Caco-2 (cell line): ENCODE measurements at regions of chr15 and their contacts with region 1.

Region 1: GRCh38 chr15:57146506-57147201 is 228.2 kb downstream of the TCF12 start:
- DNase-seq: peak in 1 of 2 experiments; percentile 21
- H3K4me3 ChIP-seq: no peak overlapping the region
- H3K4me3 Mint-ChIP-seq: no peak overlapping the region
- H3K27ac Mint-ChIP-seq: no peak overlapping the region
- H3K4me1 ChIP-seq: no peaks in the 10 kb centered on the region
- H3K4me1 Mint-ChIP-seq: peaks cover 11% of the 10 kb centered on the region
- H3K27me3 ChIP-seq: no peaks in the 10 kb centered on the region
- H3K27me3 Mint-ChIP-seq: no peaks in the 10 kb centered on the region
- CTCF ChIP-seq: peak; percentile 47 to 62

Region 2: DNA sequence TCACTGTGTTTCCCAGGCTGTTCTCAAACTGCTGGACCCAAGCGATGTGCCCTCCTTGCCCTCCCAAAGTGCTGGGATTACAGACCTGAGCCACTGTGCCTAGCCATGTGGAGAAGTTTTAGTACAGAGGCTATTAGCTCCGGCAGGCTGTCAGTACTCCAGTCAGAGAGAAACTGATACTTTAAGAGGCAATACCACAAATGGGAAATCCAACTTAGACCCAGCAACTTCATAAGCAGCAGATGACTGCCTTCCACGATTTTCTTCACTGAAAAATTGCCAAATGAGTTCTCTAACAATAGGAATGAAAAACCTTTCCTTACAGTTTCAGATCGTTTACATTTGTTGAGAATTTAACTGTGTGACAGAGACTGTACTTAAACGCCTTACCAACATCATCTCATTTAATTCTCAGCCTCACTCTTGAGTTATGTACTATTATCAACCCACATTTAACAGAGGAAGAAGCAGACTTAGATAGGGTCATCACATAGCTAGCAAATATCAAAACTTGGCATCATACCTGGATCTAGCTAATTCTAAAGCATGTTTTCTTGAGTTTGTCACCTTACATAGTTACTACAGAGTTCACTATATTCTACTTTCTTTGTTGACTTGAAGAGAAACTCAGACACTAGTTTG is 100.8 kb before region 1 on chr15:
- CTCF ChIA-PET with region 1: no interaction called
- POLR2A ChIA-PET with region 1: no interaction called
- intact Hi-C with region 1: no loop called
- DNase-seq: no peak
- H3K4me3 ChIP-seq: no peak overlapping the region
- H3K4me3 Mint-ChIP-seq: no peak overlapping the region
- H3K27ac Mint-ChIP-seq: no peak overlapping the region
- H3K4me1 ChIP-seq: no peaks in the 10 kb centered on the region
- H3K4me1 Mint-ChIP-seq: no peaks in the 10 kb centered on the region
- H3K27me3 ChIP-seq: no peaks in the 10 kb centered on the region
- H3K27me3 Mint-ChIP-seq: no peaks in the 10 kb centered on the region
- CTCF ChIP-seq: no peak

Region 3: GRCh38 chr15:57213862-57214261 is 67.2 kb after region 1 on chr15:
- CTCF ChIA-PET with region 1: interaction called, 7 read pairs
- POLR2A ChIA-PET with region 1: no interaction called
- intact Hi-C with region 1: loop called (anchors 1 kb)
- DNase-seq: peak in 1 of 2 experiments; percentile 46
- H3K4me3 ChIP-seq: no peak overlapping the region
- H3K4me3 Mint-ChIP-seq: peak overlapping the region; percentile 37
- H3K27ac Mint-ChIP-seq: no peak overlapping the region
- H3K4me1 ChIP-seq: peaks cover 4% of the 10 kb centered on the region
- H3K4me1 Mint-ChIP-seq: peaks cover 21% of the 10 kb centered on the region
- H3K27me3 ChIP-seq: no peaks in the 10 kb centered on the region
- H3K27me3 Mint-ChIP-seq: no peaks in the 10 kb centered on the region
- CTCF ChIP-seq: peak in 1 of 2 experiments; percentile 28

Region 4: GRCh38 chr15:57312318-57313133 is 165.9 kb after region 1 on chr15:
- CTCF ChIA-PET with region 1: no interaction called
- POLR2A ChIA-PET with region 1: interaction called, 5 read pairs
- intact Hi-C with region 1: loop called (anchors 5 kb)
- DNase-seq: peak; percentile 73 to 89
- H3K4me3 ChIP-seq: no peak overlapping the region
- H3K4me3 Mint-ChIP-seq: no peak overlapping the region
- H3K27ac Mint-ChIP-seq: peak overlapping the region; percentile 65
- H3K4me1 ChIP-seq: peaks cover 22% of the 10 kb centered on the region
- H3K4me1 Mint-ChIP-seq: peaks cover 31% of the 10 kb centered on the region
- H3K27me3 ChIP-seq: no peaks in the 10 kb centered on the region
- H3K27me3 Mint-ChIP-seq: no peaks in the 10 kb centered on the region
- CTCF ChIP-seq: no peak